ENCODE measurements at regions of chr12 and their contacts with region 1.

Region 1: DNA sequence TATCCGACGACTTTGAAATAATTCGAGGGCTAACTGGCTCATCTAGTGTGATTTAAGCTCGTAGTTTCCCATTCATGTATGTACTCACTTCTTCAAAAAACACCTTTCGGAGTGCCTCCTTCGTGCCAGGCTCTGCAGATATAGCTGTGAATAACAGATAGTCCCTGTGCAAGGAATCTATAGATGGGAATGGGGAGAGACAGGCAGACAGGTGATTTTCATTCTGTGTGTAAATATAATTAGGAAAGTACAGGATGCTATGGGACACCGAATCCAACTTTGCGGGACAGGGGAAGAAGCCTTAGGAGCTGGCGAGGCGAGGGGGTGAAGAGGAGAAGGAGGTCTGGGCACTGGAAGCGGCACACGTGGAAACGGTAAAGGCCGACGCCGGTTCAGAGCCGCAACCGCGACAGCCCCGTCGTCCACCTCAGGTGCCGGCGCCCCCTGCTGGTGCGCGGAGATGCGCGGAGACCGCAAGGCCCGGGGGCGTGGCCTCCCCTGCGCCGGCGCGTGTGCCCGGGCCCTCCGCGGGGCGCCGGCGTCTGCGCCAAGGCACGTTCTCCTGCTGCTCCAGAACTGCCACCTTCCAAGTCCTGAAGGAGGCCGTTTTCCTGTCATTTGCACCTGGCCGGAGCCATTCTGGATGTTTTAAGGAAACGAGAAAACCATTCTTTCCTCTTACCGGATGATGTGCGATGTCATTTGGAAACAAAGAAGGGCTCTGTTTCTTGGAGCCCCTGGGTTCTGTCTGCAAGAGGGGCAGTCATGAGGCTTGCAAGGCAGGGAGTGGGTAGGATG is 18.0 kb upstream of the CACNA1C start:
- DNase-seq: peak; percentile 88
- ATAC-seq: peak; percentile 99
- H3K4me3 Mint-ChIP-seq: peak overlapping the region; percentile 45
- H3K27ac Mint-ChIP-seq: peak overlapping the region; percentile 29
- H3K4me1 Mint-ChIP-seq: peaks cover 11% of the 10 kb centered on the region
- H3K27me3 Mint-ChIP-seq: peaks cover 53% of the 10 kb centered on the region

Region 2: GRCh38 chr12:1972856-1973317 is 61.9 kb before region 1 on chr12:
- CTCF ChIA-PET with region 1: no interaction called
- POLR2A ChIA-PET with region 1: no interaction called
- DNase-seq: no peak
- ATAC-seq: no peak
- H3K4me3 Mint-ChIP-seq: no peak overlapping the region
- H3K27ac Mint-ChIP-seq: no peak overlapping the region
- H3K4me1 Mint-ChIP-seq: no peaks in the 10 kb centered on the region
- H3K27me3 Mint-ChIP-seq: no peaks in the 10 kb centered on the region

Region 3: GRCh38 chr12:2049604-2050540 is 15.0 kb after region 1 on chr12:
- CTCF ChIA-PET with region 1: interaction called, 10 read pairs
- POLR2A ChIA-PET with region 1: no interaction called
- DNase-seq: no peak
- ATAC-seq: no peak
- H3K4me3 Mint-ChIP-seq: no peak overlapping the region
- H3K27ac Mint-ChIP-seq: no peak overlapping the region
- H3K4me1 Mint-ChIP-seq: peaks cover 19% of the 10 kb centered on the region
- H3K27me3 Mint-ChIP-seq: peaks cover 66% of the 10 kb centered on the region